Activated naive CD4-positive, alpha-beta T cell treated with anti-CD3 and anti-CD28 coated beads for 36 hours (primary cell): ENCODE measurements at regions of chr6 and their contacts with region 1.

Region 1: GRCh38 chr6:143940011-143940597 is 68.0 kb downstream of the PLAGL1 start:
- DNase-seq: peak; percentile 76
- H3K4me3 Mint-ChIP-seq: no peak overlapping the region
- H3K27ac Mint-ChIP-seq: no peak overlapping the region
- H3K4me1 Mint-ChIP-seq: no peaks in the 10 kb centered on the region
- H3K27me3 Mint-ChIP-seq: no peaks in the 10 kb centered on the region

Region 2: GRCh38 chr6:143575440-143575839 is 364.7 kb before region 1 on chr6:
- CTCF ChIA-PET with region 1: interaction called, 38 read pairs
- intact Hi-C with region 1: loop called (anchors 1 kb)
- DNase-seq: peak; percentile 69
- H3K4me3 Mint-ChIP-seq: no peak overlapping the region
- H3K27ac Mint-ChIP-seq: no peak overlapping the region
- H3K4me1 Mint-ChIP-seq: no peaks in the 10 kb centered on the region
- H3K27me3 Mint-ChIP-seq: no peaks in the 10 kb centered on the region

Region 3: DNA sequence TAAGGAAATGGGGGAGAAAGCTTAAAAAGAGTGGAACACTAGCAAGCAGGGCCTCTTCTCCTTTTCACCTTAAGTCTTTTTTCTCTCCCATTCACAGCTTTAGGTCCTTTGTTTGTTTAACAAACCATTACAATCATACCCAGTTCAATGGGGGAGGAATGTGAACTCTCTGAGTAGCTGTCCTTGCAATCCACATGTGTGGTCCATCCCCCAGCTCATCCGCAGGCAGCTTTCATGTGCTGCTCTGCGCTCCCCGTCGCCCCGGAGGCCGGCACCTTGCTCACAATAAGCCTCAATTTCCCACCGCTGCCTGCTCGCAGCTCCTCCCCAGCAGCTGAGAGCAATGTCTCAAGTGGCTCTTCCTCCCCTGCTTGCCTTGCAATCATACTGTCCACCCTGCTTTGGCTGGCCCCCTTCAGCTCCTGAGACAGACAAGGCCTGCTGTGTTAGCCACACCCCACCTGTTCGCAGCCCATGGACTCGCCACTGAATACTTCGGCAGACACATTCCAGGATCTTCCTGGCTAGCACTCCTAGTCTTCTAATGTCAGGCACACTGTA is 18.8 kb after region 1 on chr6:
- CTCF ChIA-PET with region 1: interaction called, 10 read pairs
- intact Hi-C with region 1: no loop called
- DNase-seq: no peak
- H3K4me3 Mint-ChIP-seq: no peak overlapping the region
- H3K27ac Mint-ChIP-seq: no peak overlapping the region
- H3K4me1 Mint-ChIP-seq: no peaks in the 10 kb centered on the region
- H3K27me3 Mint-ChIP-seq: no peaks in the 10 kb centered on the region

Region 4: GRCh38 chr6:144013486-144013909 is 73.4 kb after region 1 on chr6:
- CTCF ChIA-PET with region 1: interaction called, 124 read pairs
- intact Hi-C with region 1: loop called (anchors 1 kb)
- DNase-seq: peak; percentile 78
- H3K4me3 Mint-ChIP-seq: no peak overlapping the region
- H3K27ac Mint-ChIP-seq: no peak overlapping the region
- H3K4me1 Mint-ChIP-seq: peaks cover 2% of the 10 kb centered on the region
- H3K27me3 Mint-ChIP-seq: peaks cover 10% of the 10 kb centered on the region

Region 5: DNA sequence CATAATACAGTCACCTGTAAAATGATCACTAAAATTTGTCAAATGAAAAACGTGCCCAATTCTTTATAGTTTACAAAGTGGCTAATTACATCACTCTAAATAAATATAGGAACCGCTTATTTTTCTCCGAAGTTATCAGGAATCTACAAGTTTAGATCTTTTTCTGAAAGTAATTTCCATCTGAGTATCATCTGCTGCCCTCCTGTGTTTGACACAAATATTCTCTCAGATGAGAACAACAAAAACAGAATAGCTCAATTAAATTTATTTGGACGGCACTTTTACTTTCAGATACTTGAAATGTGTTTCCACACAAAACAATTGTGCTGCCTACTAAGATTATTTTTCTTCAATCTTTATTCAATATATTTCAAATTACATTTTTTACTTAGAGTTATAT is 150.3 kb after region 1 on chr6:
- CTCF ChIA-PET with region 1: interaction called, 8 read pairs
- intact Hi-C with region 1: loop called (anchors 1 kb)
- DNase-seq: no peak
- H3K4me3 Mint-ChIP-seq: no peak overlapping the region
- H3K27ac Mint-ChIP-seq: no peak overlapping the region
- H3K4me1 Mint-ChIP-seq: peaks cover 25% of the 10 kb centered on the region
- H3K27me3 Mint-ChIP-seq: no peaks in the 10 kb centered on the region